ENCODE measurements at regions of chr7 and their contacts with region 1.

Region 1: DNA sequence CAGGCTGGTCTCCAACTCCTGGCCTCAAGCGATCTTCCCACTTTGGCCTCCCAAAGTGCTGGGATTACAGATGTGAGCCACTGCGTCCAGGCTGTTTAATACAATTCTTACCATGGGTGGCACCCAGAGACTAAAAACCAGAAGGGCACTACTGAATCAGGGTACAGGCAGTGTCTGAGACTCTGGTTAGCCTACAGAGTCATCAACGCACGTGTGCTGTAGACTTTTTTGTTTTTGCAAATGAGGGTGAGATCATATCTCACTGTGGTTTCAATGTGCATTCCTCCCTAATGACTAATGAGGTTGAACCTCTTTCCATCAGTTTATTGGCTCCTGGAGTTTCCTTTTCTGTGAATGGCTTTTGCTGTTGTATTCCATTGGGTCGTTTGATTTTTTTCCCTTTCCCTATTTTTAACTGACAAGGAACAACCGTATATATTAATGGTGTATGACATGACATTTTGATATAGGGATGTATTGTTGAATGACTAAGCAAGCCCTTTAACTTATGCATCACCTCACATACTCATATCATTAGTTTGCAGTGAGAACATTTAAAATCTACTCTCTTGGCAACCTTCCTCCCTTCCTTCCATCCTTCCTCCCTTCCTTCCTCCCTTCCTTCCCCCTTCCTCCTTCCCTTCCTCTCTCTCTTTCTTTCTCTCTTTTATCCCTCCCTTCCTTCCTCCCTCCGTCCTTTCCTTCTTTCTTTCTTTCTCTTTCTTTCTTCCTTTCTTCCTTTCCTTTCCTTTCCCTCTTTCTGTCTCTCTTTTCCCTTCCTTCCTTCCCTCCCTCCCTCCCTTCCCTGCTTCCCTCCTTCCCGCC is 9.3 kb upstream of the METTL27 start:
- DNase-seq: no peak
- ATAC-seq: peak in 1 of 4 donors; percentile 42
- H3K4me3 ChIP-seq: no peak overlapping the region
- H3K27ac ChIP-seq: no peak overlapping the region
- H3K4me1 ChIP-seq: peaks cover 0 to 4% (median 0%) of the 10 kb centered on the region in 4 donors
- H3K27me3 ChIP-seq: no peaks in the 10 kb centered on the region
- CTCF ChIP-seq: no peak
- POLR2A ChIP-seq: no peak

Region 2: GRCh38 chr7:73738612-73739374 is 112.8 kb before region 1 on chr7 and contains the start of gene ABHD11:
- intact Hi-C with region 1: loop called in 1 of 2 experiments (anchors 10 kb)
- DNase-seq: peak; percentile 99 to 100 (median 100)
- ATAC-seq: peak; percentile 80 to 89 (median 84)
- H3K4me3 ChIP-seq: peak within 1 kb of the TSS; percentile 84 to 93 (median 91)
- H3K27ac ChIP-seq: peak within 1 kb of the TSS; percentile 94 to 100 (median 96)
- H3K4me1 ChIP-seq: peaks cover 0 to 8% (median 1%) of the 10 kb centered on the region in 4 donors
- H3K27me3 ChIP-seq: no peaks in the 10 kb centered on the region
- CTCF ChIP-seq: no peak
- POLR2A ChIP-seq: peak; percentile 88
- total RNA-seq, gene ABHD11: 5.6 to 8.4 (median 7.0) TPM

Region 3: DNA sequence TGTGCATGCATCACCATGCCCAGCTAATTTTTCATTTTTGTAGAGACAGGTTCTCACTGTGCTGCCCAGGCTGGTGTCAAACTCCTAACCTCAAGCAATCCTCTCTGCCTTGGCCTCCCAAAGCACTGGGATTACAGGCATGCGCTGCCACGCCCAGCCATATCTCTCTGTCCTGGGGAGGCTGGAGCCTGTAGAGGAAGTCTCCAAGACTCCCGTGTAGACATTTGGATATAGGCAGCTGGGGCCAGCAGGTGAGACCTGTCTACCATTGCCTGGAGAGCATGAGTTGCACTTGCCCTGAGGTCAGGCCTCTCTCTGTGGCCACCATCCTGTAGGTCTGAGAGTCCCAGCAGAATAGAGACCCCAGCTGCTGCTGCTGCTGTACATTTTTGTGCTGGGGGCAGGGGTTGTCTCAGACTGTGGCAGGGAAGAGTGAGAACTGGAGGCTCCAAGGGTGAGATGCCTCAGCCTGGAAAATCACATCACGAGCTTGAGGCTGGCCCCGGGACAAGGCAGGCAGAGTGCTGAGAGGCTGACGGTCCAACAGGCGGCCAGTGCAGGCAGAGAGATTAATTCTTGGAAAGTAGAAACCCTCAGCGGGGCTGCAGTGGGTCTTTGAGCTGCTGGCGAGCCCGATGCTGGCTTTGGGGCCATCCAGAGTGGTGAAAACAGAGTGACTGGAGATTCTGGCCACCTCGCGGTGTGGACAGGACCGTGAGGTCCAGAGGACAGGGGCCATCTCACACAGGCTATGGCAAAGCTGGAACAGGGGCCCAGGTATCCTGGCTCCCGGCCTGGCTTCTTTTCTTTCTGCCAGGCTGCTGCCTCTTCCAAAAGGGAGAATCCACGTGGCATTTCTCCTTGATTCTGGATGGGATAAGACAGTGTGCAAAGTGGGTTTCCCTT is 70.3 kb after region 1 on chr7:
- intact Hi-C with region 1: no loop called
- DNase-seq: no peak
- ATAC-seq: no peak
- H3K4me3 ChIP-seq: no peak overlapping the region
- H3K27ac ChIP-seq: no peak overlapping the region
- H3K4me1 ChIP-seq: no peaks in the 10 kb centered on the region
- H3K27me3 ChIP-seq: no peaks in the 10 kb centered on the region
- CTCF ChIP-seq: no peak
- POLR2A ChIP-seq: no peak